ENCODE measurements at regions of chr19 and their contacts with region 1.

Region 1: DNA sequence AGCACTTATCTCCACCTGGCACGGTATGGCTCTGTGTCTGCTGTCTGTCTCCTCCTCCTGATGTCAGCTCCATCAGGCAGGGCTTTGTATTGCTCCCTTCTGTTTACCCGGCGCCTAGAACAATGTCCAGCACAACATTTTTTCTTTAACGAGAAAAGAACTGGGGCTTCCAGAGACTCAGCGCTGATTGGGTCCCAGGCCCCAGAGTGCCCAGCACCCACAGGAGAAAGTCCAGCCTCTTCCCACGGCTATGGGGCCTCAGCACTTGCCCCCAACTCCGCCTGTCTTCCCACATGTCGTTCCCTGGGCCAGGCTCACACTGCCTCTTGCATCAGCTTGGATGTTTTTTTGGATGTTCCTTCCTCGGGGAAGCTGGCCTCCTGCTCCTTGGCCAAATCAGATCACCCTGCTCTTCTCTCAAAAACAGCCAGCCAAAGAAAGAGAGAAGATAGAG is 6.9 kb downstream of the MYPOP start:
- DNase-seq: no peak
- H3K4me3 ChIP-seq: no peak overlapping the region
- H3K27ac ChIP-seq: no peak overlapping the region
- H3K4me1 ChIP-seq: peaks cover 0 to 7% of the 10 kb centered on the region in 2 donors
- H3K27me3 ChIP-seq: no peaks in the 10 kb centered on the region
- CTCF ChIP-seq: no peak
- POLR2A ChIP-seq: no peak

Region 2: DNA sequence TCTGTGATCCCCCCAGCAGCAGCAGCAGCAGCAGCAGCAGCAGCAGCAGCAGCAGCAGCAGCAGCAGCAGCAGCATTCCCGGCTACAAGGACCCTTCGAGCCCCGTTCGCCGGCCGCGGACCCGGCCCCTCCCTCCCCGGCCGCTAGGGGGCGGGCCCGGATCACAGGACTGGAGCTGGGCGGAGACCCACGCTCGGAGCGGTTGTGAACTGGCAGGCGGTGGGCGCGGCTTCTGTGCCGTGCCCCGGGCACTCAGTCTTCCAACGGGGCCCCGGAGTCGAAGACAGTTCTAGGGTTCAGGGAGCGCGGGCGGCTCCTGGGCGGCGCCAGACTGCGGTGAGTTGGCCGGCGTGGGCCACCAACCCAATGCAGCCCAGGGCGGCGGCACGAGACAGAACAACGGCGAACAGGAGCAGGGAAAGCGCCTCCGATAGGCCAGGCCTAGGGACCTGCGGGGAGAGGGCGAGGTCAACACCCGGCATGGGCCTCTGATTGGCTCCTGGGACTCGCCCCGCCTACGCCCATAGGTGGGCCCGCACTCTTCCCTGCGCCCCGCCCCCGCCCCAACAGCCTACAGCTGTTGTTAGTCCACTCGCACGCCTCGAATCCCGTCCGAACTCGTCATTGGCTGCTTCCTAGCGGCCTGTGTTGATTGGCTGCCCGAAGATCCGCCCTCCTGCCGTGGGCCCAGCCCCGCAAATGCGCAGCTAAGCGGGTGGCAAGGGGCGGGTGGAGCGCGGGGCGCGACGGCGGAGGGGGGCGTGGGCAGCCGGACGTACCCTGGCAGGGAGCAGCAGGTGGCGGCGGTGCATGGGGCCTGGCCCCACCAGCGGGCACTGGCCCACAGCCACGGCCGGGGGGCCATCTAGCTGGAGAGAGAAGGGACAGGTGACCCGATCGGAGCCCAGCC is 125.1 kb before region 1 on chr19:
- intact Hi-C with region 1: no loop called
- DNase-seq: peak; percentile 99
- H3K4me3 ChIP-seq: peak overlapping the region in 2 of 3 donors; percentile 12 to 50
- H3K27ac ChIP-seq: peak overlapping the region; percentile 74 to 91 (median 85)
- H3K4me1 ChIP-seq: peaks cover 16 to 24% of the 10 kb centered on the region in 2 donors
- H3K27me3 ChIP-seq: no peaks in the 10 kb centered on the region
- CTCF ChIP-seq: peak; percentile 71 to 94 (median 90)
- POLR2A ChIP-seq: peak; percentile 37 to 80

Region 3: DNA sequence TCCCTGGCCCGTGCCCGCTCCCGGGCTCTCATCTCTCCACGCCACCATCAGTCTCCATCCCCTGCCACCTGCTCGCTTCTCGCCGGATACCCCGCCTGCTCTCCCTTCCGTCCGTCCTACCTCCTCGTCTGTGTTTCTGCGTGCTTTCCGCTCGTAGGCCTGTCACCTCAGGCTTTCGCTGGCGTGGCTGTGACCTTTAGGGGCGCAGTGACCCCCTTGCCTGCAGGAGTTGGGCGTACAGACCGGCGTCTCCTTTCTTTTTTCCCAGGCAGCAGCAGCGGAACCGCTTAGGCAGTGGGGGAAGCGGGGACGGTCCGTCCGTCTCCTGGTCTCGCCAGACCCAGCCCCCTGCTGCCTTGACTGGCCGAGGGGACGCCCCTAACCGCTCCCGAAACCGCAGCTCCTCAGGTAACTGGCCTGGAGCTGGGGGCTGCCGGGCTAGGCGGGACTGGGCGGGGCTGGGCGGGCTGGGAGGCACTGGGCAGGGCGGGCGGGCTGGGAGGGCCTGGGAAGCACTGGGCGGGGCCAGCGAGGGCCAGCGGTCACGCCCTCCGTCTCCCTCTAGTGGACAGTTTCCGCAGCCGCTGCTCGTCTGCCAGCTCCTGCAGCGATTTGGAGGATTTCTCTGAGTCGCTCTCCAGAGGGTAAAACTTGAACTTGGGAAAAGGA is 121.0 kb after region 1 on chr19:
- intact Hi-C with region 1: loop called (anchors 10 kb)
- DNase-seq: peak; percentile 74 to 78
- H3K4me3 ChIP-seq: peak overlapping the region; percentile 19 to 56 (median 33)
- H3K27ac ChIP-seq: no peak overlapping the region
- H3K4me1 ChIP-seq: peaks cover 3 to 21% of the 10 kb centered on the region in 2 donors
- H3K27me3 ChIP-seq: no peaks in the 10 kb centered on the region
- CTCF ChIP-seq: peak; percentile 46 to 96 (median 64)
- POLR2A ChIP-seq: peak in 1 of 2 donors; percentile 29

Region 4: GRCh38 chr19:46101293-46101692 is 205.7 kb after region 1 on chr19:
- intact Hi-C with region 1: no loop called
- DNase-seq: no peak
- H3K4me3 ChIP-seq: no peak overlapping the region
- H3K27ac ChIP-seq: no peak overlapping the region
- H3K4me1 ChIP-seq: no peaks in the 10 kb centered on the region
- H3K27me3 ChIP-seq: no peaks in the 10 kb centered on the region
- CTCF ChIP-seq: no peak
- POLR2A ChIP-seq: no peak